ENCODE measurements at regions of chr2 and their contacts with region 1.

Region 1: GRCh38 chr2:71923887-71924533 is 223.7 kb downstream of the CYP26B1 start:
- DNase-seq: peak in 2 of 3 donors; percentile 58 to 87
- ATAC-seq: peak; percentile 75
- H3K4me3 ChIP-seq: no peak overlapping the region
- H3K4me1 ChIP-seq: no peaks in the 10 kb centered on the region
- CTCF ChIP-seq: peak; percentile 62

Region 2: GRCh38 chr2:72150157-72150865 is 226.3 kb after region 1 on chr2:
- intact Hi-C with region 1: loop called (anchors 5 kb)
- DNase-seq: peak; percentile 64 to 88 (median 78)
- ATAC-seq: peak; percentile 92
- H3K4me3 ChIP-seq: no peak overlapping the region
- H3K4me1 ChIP-seq: peaks cover 42% of the 10 kb centered on the region
- CTCF ChIP-seq: peak; percentile 77

Region 3: GRCh38 chr2:72579591-72580180 is 655.7 kb after region 1 on chr2:
- intact Hi-C with region 1: loop called in 1 of 2 experiments (anchors 5 kb)
- DNase-seq: no peak
- ATAC-seq: peak; percentile 50
- H3K4me3 ChIP-seq: no peak overlapping the region
- H3K4me1 ChIP-seq: no peaks in the 10 kb centered on the region
- CTCF ChIP-seq: no peak